ENCODE measurements at regions of chr15 and their contacts with region 1.

Region 1: DNA sequence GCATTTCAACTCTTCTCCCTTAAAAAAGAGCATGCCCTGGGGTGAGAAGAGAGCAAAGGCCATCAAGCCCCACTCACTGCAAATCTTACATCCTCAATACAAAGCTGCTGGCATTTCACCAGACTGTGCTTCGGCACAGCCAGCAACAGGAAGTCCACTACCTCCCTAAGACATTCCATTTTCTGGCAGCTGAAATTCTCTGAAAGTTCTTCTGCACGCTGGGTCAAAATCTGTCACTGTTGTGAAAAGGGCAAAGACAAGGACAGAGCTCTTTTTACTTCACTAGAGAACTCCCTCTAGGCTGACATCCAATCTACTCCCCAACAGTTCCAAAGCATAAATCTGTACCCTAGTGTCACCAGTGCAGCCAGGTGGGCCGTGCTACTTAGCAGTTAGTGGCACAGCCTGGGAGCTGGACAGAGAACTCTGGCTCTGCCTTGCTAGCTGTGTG is 6.3 kb downstream of the MTMR10 start:
- DNase-seq: peak; percentile 25
- H3K4me3 ChIP-seq: no peak overlapping the region
- H3K27ac ChIP-seq: peak overlapping the region; percentile 54 to 59
- H3K4me1 ChIP-seq: no peaks in the 10 kb centered on the region
- H3K27me3 ChIP-seq: no peaks in the 10 kb centered on the region
- CTCF ChIP-seq: no peak
- POLR2A ChIP-seq: no peak

Region 2: DNA sequence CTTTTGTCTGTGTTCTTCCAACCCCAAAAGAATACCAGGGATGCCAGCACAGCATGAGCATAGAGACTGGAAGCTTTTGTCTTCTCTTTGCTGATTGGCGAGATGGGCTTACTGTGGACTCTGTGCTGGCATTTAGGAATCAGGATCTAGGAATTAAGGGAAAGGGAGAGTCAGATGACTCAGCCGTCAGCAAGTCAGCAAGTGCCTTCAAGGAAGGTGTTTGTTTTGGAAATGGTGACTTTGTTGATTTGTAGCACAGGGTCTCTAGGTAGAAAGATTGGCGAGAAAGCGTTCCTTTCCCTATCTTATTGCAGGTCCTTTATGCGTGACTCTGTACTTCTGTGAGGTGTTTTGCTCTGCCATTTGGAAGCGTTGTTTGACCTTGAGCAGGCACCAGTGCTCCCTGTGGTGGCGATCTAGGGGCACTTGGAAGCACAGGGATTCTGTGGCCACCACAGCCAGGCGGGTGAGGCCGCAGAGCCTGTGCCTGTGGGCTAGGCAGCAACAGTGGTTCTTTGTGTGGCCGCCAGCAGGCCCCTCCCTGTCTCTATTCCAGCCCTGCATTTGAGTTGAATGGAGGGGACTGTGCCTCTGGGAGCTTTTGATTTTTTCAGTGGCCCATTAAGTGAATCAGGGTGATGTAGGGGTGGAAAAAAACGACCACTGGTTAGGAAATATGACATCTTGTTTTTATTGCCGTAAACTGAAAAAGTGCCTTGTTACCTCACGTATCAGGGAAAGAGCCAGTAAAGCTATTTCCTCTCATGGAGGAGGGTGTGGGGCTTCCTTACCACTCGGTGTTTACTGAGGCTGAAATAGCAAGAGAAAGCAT is 62.4 kb before region 1 on chr15:
- intact Hi-C with region 1: loop called (anchors 10 kb)
- DNase-seq: no peak
- H3K4me3 ChIP-seq: no peak overlapping the region
- H3K27ac ChIP-seq: peak overlapping the region in 1 of 2 donors; percentile 13
- H3K4me1 ChIP-seq: no peaks in the 10 kb centered on the region
- H3K27me3 ChIP-seq: no peaks in the 10 kb centered on the region
- CTCF ChIP-seq: no peak
- POLR2A ChIP-seq: no peak

Region 3: GRCh38 chr15:31091481-31091880 is 106.4 kb after region 1 on chr15:
- intact Hi-C with region 1: no loop called
- DNase-seq: no peak
- H3K4me3 ChIP-seq: no peak overlapping the region
- H3K27ac ChIP-seq: no peak overlapping the region
- H3K4me1 ChIP-seq: no peaks in the 10 kb centered on the region
- H3K27me3 ChIP-seq: no peaks in the 10 kb centered on the region
- CTCF ChIP-seq: no peak
- POLR2A ChIP-seq: no peak

Region 4: DNA sequence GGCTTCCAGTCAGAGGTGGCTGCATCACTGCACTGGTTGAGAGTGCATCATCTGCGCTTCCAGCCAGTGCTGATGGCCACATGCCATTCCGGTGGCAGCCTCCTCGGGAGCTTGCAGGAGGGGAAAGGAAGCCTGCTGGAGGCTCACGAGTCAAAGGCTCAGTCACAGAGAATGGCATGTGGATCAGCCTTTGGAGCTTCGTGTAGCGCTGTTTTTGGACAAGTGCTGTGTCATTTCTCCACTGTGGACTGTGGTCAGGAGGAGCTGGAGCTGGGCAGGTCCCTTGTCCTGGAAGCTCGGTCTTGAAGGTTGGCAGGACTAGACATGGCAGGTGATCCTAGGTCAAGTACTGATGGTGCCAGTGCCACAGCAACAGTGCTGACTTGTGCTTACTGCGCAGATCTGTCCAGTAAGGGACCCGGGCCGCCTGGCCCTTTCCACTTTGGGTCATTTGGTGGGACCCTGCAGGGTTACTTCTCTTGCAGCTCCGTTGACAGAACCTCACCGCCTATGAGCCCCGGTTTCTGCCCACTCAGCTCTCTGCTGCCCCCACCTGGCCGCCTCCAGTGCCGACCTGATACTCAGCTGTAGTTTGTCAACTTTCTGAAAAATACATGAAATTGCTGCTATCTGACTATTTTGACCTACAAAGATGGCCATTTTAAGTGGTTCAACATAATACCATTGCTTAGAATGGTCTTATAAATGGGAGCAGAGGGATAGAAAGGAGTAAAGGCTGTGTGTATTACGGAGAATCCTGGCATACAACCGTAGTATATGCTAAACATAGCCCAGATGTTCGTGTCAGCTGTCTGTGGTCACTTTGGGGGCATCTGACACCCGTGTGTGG is 144.0 kb after region 1 on chr15:
- intact Hi-C with region 1: loop called (anchors 10 kb)
- DNase-seq: peak; percentile 75
- H3K4me3 ChIP-seq: no peak overlapping the region
- H3K27ac ChIP-seq: no peak overlapping the region
- H3K4me1 ChIP-seq: peaks cover 9% of the 10 kb centered on the region
- H3K27me3 ChIP-seq: no peaks in the 10 kb centered on the region
- CTCF ChIP-seq: peak; percentile 84 to 94 (median 91)
- POLR2A ChIP-seq: no peak

Region 5: DNA sequence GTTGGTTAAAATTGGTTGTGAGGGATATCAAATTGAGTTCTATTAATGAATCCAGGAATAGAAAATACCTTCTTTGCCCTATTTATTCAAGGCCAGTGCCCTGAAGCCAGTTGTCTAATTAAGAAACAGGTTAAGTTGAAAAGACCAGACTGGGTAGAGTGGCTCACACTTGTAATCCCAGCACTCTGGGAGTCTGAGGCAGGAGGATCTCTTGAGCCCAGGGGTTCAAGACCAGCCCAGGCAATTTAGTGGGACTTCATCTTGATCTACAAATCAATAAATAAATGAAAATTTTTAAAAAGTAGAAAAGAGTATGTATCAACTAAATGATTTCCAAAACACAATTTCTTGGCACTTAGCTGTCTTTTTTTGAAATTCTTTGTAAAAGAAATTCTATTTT is 156.7 kb after region 1 on chr15:
- intact Hi-C with region 1: no loop called
- DNase-seq: no peak
- H3K4me3 ChIP-seq: no peak overlapping the region
- H3K27ac ChIP-seq: no peak overlapping the region
- H3K4me1 ChIP-seq: no peaks in the 10 kb centered on the region
- H3K27me3 ChIP-seq: no peaks in the 10 kb centered on the region
- CTCF ChIP-seq: no peak
- POLR2A ChIP-seq: no peak

Region 6: GRCh38 chr15:31177951-31178350 is 192.8 kb after region 1 on chr15:
- intact Hi-C with region 1: no loop called
- DNase-seq: no peak
- H3K4me3 ChIP-seq: no peak overlapping the region
- H3K27ac ChIP-seq: no peak overlapping the region
- H3K4me1 ChIP-seq: no peaks in the 10 kb centered on the region
- H3K27me3 ChIP-seq: no peaks in the 10 kb centered on the region
- CTCF ChIP-seq: no peak
- POLR2A ChIP-seq: no peak

Measured in prostate gland (tissue), 2 donors.